ENCODE measurements at regions of chr17 and their contacts with region 1.

Region 1: DNA sequence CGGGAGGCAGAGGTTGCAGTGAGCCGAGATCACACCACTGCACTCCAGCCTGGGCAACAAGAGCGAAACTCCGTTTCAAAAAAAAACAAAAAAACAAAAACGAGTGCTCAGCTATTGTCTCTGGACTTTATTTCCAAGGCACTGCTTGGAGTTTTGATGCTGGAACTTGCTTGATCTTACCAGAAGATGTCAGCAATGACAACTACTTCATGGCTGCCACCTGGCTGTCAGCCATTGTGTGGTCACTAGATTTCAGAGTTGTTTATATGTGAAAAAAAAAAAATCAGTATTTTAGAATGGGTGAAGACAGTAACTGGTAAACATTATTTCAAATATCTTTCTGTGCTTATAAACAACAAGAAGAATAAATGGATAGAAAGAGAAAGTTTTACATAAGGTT is 26.3 kb upstream of the OR4D1 start:
- DNase-seq: no peak
- H3K4me3 Mint-ChIP-seq: no peak overlapping the region
- H3K27ac Mint-ChIP-seq: no peak overlapping the region
- H3K4me1 Mint-ChIP-seq: no peaks in the 10 kb centered on the region
- H3K27me3 Mint-ChIP-seq: peaks cover 22% of the 10 kb centered on the region

Region 2: GRCh38 chr17:58172369-58173071 is 50.6 kb after region 1 on chr17:
- intact Hi-C with region 1: loop called (anchors 1 kb)
- DNase-seq: peak; percentile 36
- H3K4me3 Mint-ChIP-seq: no peak overlapping the region
- H3K27ac Mint-ChIP-seq: no peak overlapping the region
- H3K4me1 Mint-ChIP-seq: peaks cover 28% of the 10 kb centered on the region
- H3K27me3 Mint-ChIP-seq: peaks cover 18% of the 10 kb centered on the region